Left ventricle myocardium inferior (tissue), 1 donor: ENCODE measurements at regions of chr1 and their contacts with region 1.

Region 1: GRCh38 chr1:45508295-45509151 is 8.4 kb downstream of the MMACHC start:
- DNase-seq: no peak
- H3K4me3 ChIP-seq: no peak overlapping the region
- H3K27ac ChIP-seq: peak overlapping the region; percentile 63
- H3K4me1 ChIP-seq: peaks cover 34% of the 10 kb centered on the region
- H3K27me3 ChIP-seq: no peaks in the 10 kb centered on the region
- CTCF ChIP-seq: peak; percentile 50

Region 2: DNA sequence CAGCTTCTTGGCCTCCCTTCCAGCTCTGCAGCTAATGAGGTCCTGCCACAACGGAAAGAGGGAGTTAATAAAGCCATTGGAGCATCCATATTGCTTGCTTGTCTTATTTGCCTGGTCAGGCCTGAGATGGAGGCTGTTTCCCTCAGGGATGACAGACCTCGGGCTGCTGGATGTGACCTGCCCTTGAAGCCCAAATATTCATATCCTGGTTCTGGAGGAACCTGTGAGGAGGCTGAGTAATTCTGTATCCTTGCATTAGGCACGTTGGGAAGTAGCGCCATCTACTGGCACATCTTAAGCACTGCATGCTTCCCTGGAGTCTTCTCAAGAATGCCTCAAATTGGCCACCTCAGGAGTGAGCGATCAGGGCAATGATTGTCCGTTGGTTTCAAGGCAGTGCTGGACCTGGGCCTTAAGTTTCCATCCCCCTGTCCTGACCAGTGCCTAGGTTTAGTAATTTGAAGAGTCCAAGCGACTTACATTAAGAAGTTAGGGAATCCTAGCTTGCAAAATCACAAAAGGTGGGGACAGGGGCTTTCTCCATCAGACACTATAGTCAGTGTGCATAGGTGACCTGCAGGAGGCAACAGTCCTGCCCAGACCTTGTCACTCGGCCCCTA is 61.5 kb after region 1 on chr1:
- intact Hi-C with region 1: loop called (anchors 5 kb)
- DNase-seq: peak; percentile 44
- H3K4me3 ChIP-seq: no peak overlapping the region
- H3K27ac ChIP-seq: no peak overlapping the region
- H3K4me1 ChIP-seq: peaks cover 13% of the 10 kb centered on the region
- H3K27me3 ChIP-seq: no peaks in the 10 kb centered on the region
- CTCF ChIP-seq: peak; percentile 99